HepG2 (cell line): ENCODE measurements at regions of chr3 and their contacts with region 1.

Region 1: GRCh38 chr3:88180398-88180999 is 30.7 kb downstream of the C3orf38 start:
- DNase-seq: no peak
- ATAC-seq: no peak
- H3K4me3 ChIP-seq: no peak overlapping the region
- H3K27ac ChIP-seq: no peak overlapping the region
- H3K4me1 ChIP-seq: peaks cover 17% of the 10 kb centered on the region
- H3K27me3 ChIP-seq: no peaks in the 10 kb centered on the region
- CTCF ChIP-seq: peak; percentile 59
- EP300 ChIP-seq: no peak
- POLR2A ChIP-seq: no peak
- RAD21 ChIP-seq: no peak

Region 2: GRCh38 chr3:87350364-87351199 is 829.9 kb before region 1 on chr3:
- CTCF ChIA-PET with region 1: no interaction called
- POLR2A ChIA-PET with region 1: no interaction called
- in situ Hi-C with region 1: no loop called
- intact Hi-C with region 1: loop called (anchors 2 kb)
- DNase-seq: peak; percentile 41
- ATAC-seq: peak; percentile 93
- H3K4me3 ChIP-seq: no peak overlapping the region
- H3K27ac ChIP-seq: no peak overlapping the region
- H3K4me1 ChIP-seq: no peaks in the 10 kb centered on the region
- H3K27me3 ChIP-seq: no peaks in the 10 kb centered on the region
- CTCF ChIP-seq: peak; percentile 73
- EP300 ChIP-seq: no peak
- POLR2A ChIP-seq: no peak
- RAD21 ChIP-seq: 0 out of 2 replicates have a peak, but pooled peaks have one; percentile 25

Region 3: GRCh38 chr3:87771341-87772192 is 408.9 kb before region 1 on chr3:
- CTCF ChIA-PET with region 1: no interaction called
- POLR2A ChIA-PET with region 1: no interaction called
- in situ Hi-C with region 1: no loop called
- intact Hi-C with region 1: loop called (anchors 2 kb)
- DNase-seq: peak; percentile 35
- ATAC-seq: peak; percentile 97
- H3K4me3 ChIP-seq: no peak overlapping the region
- H3K27ac ChIP-seq: no peak overlapping the region
- H3K4me1 ChIP-seq: no peaks in the 10 kb centered on the region
- H3K27me3 ChIP-seq: no peaks in the 10 kb centered on the region
- CTCF ChIP-seq: peak; percentile 71
- EP300 ChIP-seq: no peak
- POLR2A ChIP-seq: no peak
- RAD21 ChIP-seq: peak; percentile 38; the same call in 1 of the 2 replicates

Region 4: GRCh38 chr3:88058591-88059368 is 121.7 kb before region 1 on chr3 and contains the starts of genes CGGBP1 and ZNF654:
- CTCF ChIA-PET with region 1: no interaction called
- POLR2A ChIA-PET with region 1: no interaction called
- in situ Hi-C with region 1: no loop called
- intact Hi-C with region 1: loop called (anchors 10 kb)
- DNase-seq: peak; percentile 97
- ATAC-seq: peak; percentile 96
- H3K4me3 ChIP-seq: peak within 1 kb of the TSS; percentile 80 to 95 (median 91)
- H3K27ac ChIP-seq: peak within 1 kb of the TSS; percentile 88
- H3K4me1 ChIP-seq: peaks cover 30% of the 10 kb centered on the region
- H3K27me3 ChIP-seq: no peaks in the 10 kb centered on the region; a peak in 1 of 5 replicates
- CTCF ChIP-seq: no peak
- EP300 ChIP-seq: no peak; a peak in 1 of 4 replicates
- POLR2A ChIP-seq: peak; percentile 67 to 93
- RAD21 ChIP-seq: no peak
- total RNA-seq, gene CGGBP1: 38.9 and 45.7 TPM in 2 replicates
- total RNA-seq, gene ZNF654: 4.1 and 5.3 TPM in 2 replicates